Natural killer cell (primary cell): ENCODE measurements at regions of chr5 and their contacts with region 1.

Region 1: GRCh38 chr5:126129431-126129830 is 293.8 kb upstream of the GRAMD2B start:
- DNase-seq: no peak
- ATAC-seq: no peak
- H3K4me3 ChIP-seq: no peak overlapping the region
- H3K4me3 Mint-ChIP-seq: no peak overlapping the region
- H3K27ac ChIP-seq: no peak overlapping the region
- H3K27ac Mint-ChIP-seq: no peak overlapping the region
- H3K4me1 ChIP-seq: no peaks in the 10 kb centered on the region
- H3K4me1 Mint-ChIP-seq: no peaks in the 10 kb centered on the region
- H3K27me3 ChIP-seq: no peaks in the 10 kb centered on the region
- H3K27me3 Mint-ChIP-seq: no peaks in the 10 kb centered on the region
- CTCF ChIP-seq: no peak

Region 2: DNA sequence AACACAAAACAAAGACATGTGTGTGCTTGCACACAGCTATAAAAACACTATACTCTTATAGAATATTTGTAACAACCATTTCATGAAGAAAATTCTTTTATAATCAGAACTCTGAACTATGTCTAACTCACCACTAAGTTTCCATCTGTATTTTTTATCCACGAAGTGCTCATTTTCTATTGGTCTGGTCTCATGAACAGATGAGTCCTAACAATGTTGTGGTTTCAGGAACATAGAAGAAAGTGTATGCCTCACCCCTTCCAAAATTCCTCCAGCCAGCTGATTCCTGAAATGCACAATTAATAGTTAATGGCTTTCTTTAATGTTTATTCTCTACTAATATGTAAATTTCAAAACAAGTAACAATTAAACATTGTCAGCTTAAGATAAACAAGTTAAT is 31.6 kb before region 1 on chr5:
- intact Hi-C with region 1: loop called (anchors 2 kb)
- DNase-seq: no peak
- ATAC-seq: no peak
- H3K4me3 ChIP-seq: no peak overlapping the region
- H3K4me3 Mint-ChIP-seq: no peak overlapping the region
- H3K27ac ChIP-seq: no peak overlapping the region
- H3K27ac Mint-ChIP-seq: no peak overlapping the region
- H3K4me1 ChIP-seq: no peaks in the 10 kb centered on the region
- H3K4me1 Mint-ChIP-seq: no peaks in the 10 kb centered on the region
- H3K27me3 ChIP-seq: no peaks in the 10 kb centered on the region
- H3K27me3 Mint-ChIP-seq: no peaks in the 10 kb centered on the region
- CTCF ChIP-seq: no peak